H1 (cell line): ENCODE measurements at regions of chr6 and their contacts with region 1.

Region 1: GRCh38 chr6:40672097-40672496 is 84.9 kb upstream of the LRFN2 start:
- DNase-seq: no peak
- H3K4me3 ChIP-seq: no peak overlapping the region
- H3K27ac ChIP-seq: no peak overlapping the region
- H3K4me1 ChIP-seq: no peaks in the 10 kb centered on the region
- H3K27me3 ChIP-seq: no peaks in the 10 kb centered on the region
- CTCF ChIP-seq: peak; percentile 44 to 65 (median 56)
- EP300 ChIP-seq: no peak
- POLR2A ChIP-seq: no peak
- RAD21 ChIP-seq: peak; percentile 36 to 57; a peak in 3 of 4 replicates

Region 2: DNA sequence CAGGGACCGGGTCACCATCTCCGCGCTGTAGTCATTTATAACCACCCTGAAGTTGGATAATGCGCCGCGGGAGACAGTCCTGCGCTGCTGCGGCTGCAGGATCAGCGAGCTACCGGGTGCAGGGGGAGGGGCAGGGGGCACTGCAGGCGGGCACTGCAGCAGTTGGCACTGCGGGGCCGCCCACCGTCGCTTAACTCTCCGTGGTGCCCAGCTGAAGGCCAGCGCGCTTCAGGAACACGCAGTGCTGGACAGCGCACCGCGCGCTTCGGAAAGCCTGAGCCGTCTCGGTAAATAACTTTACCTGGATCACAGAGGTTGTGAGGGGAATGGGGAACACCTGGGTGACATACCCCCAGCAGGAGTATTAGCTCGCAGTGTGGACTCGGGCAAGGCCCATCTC is 72.5 kb before region 1 on chr6:
- CTCF ChIA-PET with region 1: no interaction called
- POLR2A ChIA-PET with region 1: no interaction called
- DNase-seq: no peak
- H3K4me3 ChIP-seq: no peak overlapping the region
- H3K27ac ChIP-seq: no peak overlapping the region
- H3K4me1 ChIP-seq: no peaks in the 10 kb centered on the region
- H3K27me3 ChIP-seq: no peaks in the 10 kb centered on the region
- CTCF ChIP-seq: no peak
- EP300 ChIP-seq: no peak
- POLR2A ChIP-seq: no peak
- RAD21 ChIP-seq: no peak

Region 3: DNA sequence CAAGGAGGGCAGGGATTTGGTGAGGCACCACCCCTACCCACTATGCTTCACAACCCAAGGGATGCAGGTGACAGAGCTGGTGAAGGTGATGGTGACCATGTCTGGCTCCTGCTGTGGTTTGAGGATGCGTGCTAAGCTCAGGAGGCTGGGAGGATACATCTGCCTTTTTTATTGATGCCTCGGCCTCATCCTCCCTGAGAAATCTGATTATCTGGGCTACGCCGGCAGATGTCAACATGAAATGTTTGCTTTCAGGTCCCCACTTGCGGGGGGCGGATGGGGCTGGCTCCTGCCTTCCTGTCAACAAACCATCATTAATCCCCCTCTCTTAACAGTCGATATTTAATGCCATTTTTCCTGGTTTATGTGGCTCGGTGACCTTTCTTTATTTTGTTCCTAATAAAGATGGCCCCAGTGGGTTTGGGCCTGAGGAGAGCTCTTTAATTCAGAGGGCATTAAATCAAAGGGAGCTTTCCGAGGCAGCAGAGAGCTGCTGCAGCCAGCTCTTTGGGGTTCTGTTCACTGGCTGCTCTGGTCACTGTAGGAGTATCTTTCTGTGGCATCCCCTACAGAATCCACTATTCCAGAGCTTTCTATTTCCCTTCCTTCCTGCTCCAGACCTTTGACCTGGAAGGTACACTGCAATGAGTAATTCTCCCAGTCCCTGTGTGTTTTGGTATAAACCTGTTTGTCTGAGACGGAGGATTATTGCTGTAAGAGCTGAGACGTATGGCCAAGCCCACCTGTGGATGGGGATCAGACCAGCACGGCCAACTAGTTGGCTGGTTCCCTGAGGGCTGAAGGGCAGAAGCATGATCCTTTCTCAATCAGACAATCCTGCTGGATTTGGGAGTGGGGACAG is 51.3 kb before region 1 on chr6:
- CTCF ChIA-PET with region 1: no interaction called
- POLR2A ChIA-PET with region 1: no interaction called
- DNase-seq: no peak
- H3K4me3 ChIP-seq: no peak overlapping the region
- H3K27ac ChIP-seq: no peak overlapping the region
- H3K4me1 ChIP-seq: no peaks in the 10 kb centered on the region
- H3K27me3 ChIP-seq: no peaks in the 10 kb centered on the region; a peak in 1 of 7 replicates
- CTCF ChIP-seq: no peak
- EP300 ChIP-seq: no peak
- POLR2A ChIP-seq: no peak
- RAD21 ChIP-seq: no peak

Region 4: GRCh38 chr6:40692337-40692736 is 20.2 kb after region 1 on chr6:
- CTCF ChIA-PET with region 1: interaction called, 20 read pairs
- POLR2A ChIA-PET with region 1: no interaction called
- DNase-seq: no peak
- H3K4me3 ChIP-seq: no peak overlapping the region
- H3K27ac ChIP-seq: no peak overlapping the region
- H3K4me1 ChIP-seq: no peaks in the 10 kb centered on the region
- H3K27me3 ChIP-seq: no peaks in the 10 kb centered on the region
- CTCF ChIP-seq: no peak
- EP300 ChIP-seq: no peak
- POLR2A ChIP-seq: no peak
- RAD21 ChIP-seq: no peak

Region 5: DNA sequence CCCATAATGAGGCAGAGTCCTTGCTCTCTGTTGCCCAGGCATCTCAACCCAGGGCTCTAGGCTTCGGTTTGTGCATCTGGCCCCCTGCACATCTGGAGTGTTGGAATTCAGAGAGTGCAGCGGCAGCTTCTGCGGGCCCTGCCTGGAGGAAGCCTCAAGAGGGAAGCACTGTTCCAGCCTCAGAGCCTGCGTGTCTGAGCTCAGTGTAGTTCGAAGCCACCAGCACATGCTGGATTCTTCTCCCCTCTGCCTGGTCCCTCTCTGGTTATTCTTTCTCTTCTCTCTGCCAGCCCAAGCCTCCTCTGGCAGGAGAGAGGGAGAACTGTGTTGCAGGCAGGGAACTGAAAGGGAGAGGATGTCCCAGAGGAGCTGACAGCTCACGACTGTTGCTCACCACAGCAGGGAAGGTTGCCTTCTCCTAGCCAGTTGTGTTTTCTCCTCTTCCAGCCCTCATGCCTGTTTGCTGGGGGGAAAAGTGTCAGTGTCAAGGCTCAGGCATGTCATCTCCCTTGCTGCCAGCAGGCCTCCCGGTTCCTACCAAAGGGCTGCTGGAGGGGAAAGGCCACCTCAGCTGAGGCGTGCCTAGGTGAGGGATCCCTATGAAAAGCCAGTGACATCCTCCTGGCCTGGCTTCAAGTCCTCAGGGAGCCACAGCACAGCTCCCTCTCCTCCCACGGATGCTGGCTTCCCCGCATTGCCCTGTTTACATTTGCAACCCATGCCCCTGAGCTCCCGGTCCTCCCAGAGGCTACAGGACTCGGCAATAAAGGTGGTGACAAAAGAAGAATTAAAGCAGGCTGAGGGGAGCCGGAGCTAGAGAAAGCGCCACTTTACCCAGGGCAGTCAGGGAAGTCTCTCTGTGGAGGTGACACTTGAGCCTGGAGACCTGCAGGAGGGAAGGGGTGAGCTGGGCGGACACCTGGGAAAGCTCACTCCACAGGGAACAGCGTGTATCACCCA is 41.2 kb after region 1 on chr6:
- CTCF ChIA-PET with region 1: interaction called, 10 read pairs
- POLR2A ChIA-PET with region 1: no interaction called
- DNase-seq: no peak
- H3K4me3 ChIP-seq: no peak overlapping the region
- H3K27ac ChIP-seq: no peak overlapping the region
- H3K4me1 ChIP-seq: peaks cover 0 to 2% (median 0%) of the 10 kb centered on the region in 4 experiments; a peak in 2 of 7 replicates
- H3K27me3 ChIP-seq: no peaks in the 10 kb centered on the region; a peak in 1 of 7 replicates
- CTCF ChIP-seq: peak; percentile 26 to 45 (median 44); a peak in 3 of 4 replicates
- EP300 ChIP-seq: no peak
- POLR2A ChIP-seq: no peak
- RAD21 ChIP-seq: peak; percentile 52 to 65

Region 6: DNA sequence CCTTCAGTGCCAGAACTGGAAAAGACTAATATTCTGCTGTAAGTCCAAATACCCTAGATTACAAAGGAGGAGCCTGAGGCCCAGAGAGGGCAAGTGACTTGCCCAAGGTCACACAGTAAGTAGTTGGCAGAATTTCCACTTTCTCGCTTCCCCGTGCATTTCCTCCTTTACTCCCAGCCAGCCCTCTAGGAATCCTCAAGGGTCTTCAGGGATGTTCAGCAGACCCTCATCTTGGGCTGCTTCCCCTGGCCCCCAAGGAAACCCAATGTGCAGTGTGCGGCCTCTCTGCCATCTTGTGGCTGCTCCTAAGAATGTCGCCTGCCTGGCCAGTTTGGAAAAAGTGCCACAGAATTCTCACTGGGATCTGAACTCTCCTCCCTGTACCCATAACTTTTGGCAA is 132.8 kb after region 1 on chr6:
- CTCF ChIA-PET with region 1: interaction called, 10 read pairs
- POLR2A ChIA-PET with region 1: no interaction called
- DNase-seq: no peak
- H3K4me3 ChIP-seq: no peak overlapping the region
- H3K27ac ChIP-seq: no peak overlapping the region
- H3K4me1 ChIP-seq: peaks cover 0 to 6% (median 0%) of the 10 kb centered on the region in 4 experiments; a peak in 2 of 7 replicates
- H3K27me3 ChIP-seq: no peaks in the 10 kb centered on the region
- CTCF ChIP-seq: peak; percentile 77 to 82 (median 78)
- EP300 ChIP-seq: no peak
- POLR2A ChIP-seq: no peak
- RAD21 ChIP-seq: peak; percentile 87 to 88

Region 7: GRCh38 chr6:40845553-40845952 is 173.5 kb after region 1 on chr6:
- CTCF ChIA-PET with region 1: interaction called, 17 read pairs
- POLR2A ChIA-PET with region 1: no interaction called
- DNase-seq: peak; percentile 25 to 73
- H3K4me3 ChIP-seq: no peak overlapping the region
- H3K27ac ChIP-seq: no peak overlapping the region
- H3K4me1 ChIP-seq: no peaks in the 10 kb centered on the region
- H3K27me3 ChIP-seq: no peaks in the 10 kb centered on the region
- CTCF ChIP-seq: peak; percentile 59 to 91 (median 79)
- EP300 ChIP-seq: no peak
- POLR2A ChIP-seq: no peak
- RAD21 ChIP-seq: peak; percentile 79 to 85

Region 8: GRCh38 chr6:41157323-41157722 is 485.2 kb after region 1 on chr6:
- CTCF ChIA-PET with region 1: no interaction called
- POLR2A ChIA-PET with region 1: no interaction called
- DNase-seq: peak in 1 of 2 experiments; percentile 10
- H3K4me3 ChIP-seq: no peak overlapping the region
- H3K27ac ChIP-seq: no peak overlapping the region
- H3K4me1 ChIP-seq: peaks cover 0 to 6% (median 0%) of the 10 kb centered on the region in 4 experiments; a peak in 1 of 7 replicates
- H3K27me3 ChIP-seq: no peaks in the 10 kb centered on the region
- CTCF ChIP-seq: no peak
- EP300 ChIP-seq: no peak
- POLR2A ChIP-seq: no peak
- RAD21 ChIP-seq: no peak